K562 (cell line): ENCODE measurements at regions of chr1 and their contacts with region 1.

Region 1: DNA sequence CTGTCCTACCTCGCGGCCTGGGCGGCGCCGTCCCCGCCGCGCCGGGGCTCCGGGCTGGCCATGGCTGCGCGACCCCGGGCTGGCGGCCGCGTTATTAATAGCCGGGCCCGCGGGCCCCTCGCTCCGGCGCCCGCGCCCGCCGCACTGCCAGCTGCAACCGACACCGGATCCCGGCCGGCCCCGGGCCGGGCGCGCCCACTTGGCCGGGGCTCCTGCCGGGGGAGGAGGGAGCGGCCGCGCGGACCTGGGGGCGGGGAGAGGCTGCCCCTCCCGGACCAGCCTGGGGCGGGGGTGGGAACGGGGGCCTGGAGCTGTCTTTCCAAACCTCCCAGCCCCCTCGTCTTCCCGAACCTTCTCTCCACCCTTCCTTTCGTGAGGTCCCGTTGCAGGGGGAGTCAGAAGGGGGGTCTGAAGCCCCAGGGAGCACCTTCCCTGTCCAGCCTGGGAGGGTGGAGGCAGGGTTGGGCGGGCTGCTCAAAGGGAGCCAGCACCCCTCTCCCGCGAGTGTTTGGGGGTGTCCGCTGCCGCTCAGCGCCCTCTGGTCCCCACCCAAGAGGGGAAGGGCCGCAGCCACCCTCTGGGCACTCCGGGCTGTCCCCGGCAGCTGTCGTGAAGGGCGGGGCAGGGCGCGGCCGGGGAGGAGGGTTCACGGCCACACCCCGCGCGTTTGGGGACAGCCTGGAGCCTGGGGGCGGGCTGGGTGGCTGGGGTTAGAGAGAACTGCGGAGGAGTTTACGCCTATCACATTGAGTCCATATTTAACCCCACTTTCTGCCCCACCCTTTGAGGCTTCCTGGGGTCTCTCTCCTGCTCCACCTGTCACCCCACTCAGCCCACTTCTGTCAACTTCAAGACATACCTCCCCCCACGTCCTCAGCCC is at the start of gene SYNC:
- DNase-seq: peak; percentile 92 to 99 (median 96)
- ATAC-seq: peak; percentile 97
- H3K4me3 ChIP-seq: peak within 1 kb of the TSS; percentile 59
- H3K27ac ChIP-seq: peak within 1 kb of the TSS; percentile 49; the same call in 2 of the 3 replicates
- H3K4me1 ChIP-seq: peaks cover 9 to 30% of the 10 kb centered on the region in 2 experiments; a peak in 4 of 5 replicates
- H3K27me3 ChIP-seq: no peaks in the 10 kb centered on the region
- CTCF ChIP-seq: no peak; a peak in 1 of 6 replicates
- EP300 ChIP-seq: no peak; the same call in 1 of the 2 replicates
- POLR2A ChIP-seq: peak; percentile 61
- RAD21 ChIP-seq: no peak
- polyA plus RNA-seq, gene SYNC: 0.49 to 0.74 TPM

Region 2: GRCh38 chr1:32686387-32686786 is 16.5 kb before region 1 on chr1:
- CTCF ChIA-PET with region 1: no interaction called
- POLR2A ChIA-PET with region 1: interaction called, 14 read pairs
- in situ Hi-C with region 1: no loop called
- intact Hi-C with region 1: no loop called
- DNase-seq: no peak
- ATAC-seq: no peak
- H3K4me3 ChIP-seq: no peak overlapping the region
- H3K27ac ChIP-seq: no peak overlapping the region
- H3K4me1 ChIP-seq: no peaks in the 10 kb centered on the region
- H3K27me3 ChIP-seq: no peaks in the 10 kb centered on the region
- CTCF ChIP-seq: no peak
- EP300 ChIP-seq: no peak
- POLR2A ChIP-seq: no peak; the same call in 1 of the 2 replicates
- RAD21 ChIP-seq: no peak